ENCODE measurements at regions of chr9 and their contacts with region 1.

Region 1: DNA sequence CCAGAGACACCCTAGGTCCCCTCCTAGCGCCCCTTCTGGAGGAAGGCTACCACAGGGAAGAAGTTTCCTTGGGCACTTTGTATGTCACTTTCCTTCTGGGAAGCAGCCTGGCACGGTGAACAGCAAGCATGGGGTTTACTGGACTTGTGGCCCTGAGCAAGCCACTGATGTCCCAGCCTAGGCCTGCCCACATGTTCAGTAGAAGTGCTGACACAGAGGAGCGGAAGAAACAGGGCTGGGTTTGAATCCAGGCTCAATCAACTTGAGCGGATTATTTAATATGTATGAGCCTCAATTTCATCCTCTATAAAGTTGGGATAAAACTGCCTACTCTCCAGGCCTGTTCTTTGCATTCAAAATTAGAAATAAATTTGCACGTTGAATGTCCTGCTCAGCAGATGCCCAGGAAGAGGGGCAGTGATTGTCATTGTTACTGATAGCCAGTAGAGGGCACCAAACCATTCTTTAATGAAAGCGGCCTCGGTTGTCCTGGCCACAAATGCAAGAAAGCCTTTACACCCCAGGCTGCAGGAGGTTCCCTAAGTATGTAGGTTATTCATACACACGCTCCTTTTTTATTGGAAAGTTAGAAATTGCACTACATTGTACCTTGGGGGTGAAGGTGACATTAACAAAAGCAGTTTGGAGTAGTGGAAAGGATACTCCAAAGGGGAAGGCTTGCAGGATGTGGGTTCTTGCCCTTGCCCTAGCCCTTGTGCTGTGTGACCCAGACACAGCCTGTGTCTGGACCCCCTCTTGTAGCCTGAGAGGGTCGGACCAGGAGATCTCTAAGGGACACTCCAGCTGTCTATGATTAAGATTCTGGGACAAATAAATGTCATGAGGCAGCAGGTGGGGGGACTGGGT is 13.4 kb upstream of the XPA start:
- DNase-seq: peak; percentile 25
- H3K4me3 ChIP-seq: no peak overlapping the region
- H3K27ac ChIP-seq: no peak overlapping the region
- H3K4me1 ChIP-seq: no peaks in the 10 kb centered on the region
- H3K27me3 ChIP-seq: peaks cover 9% of the 10 kb centered on the region
- CTCF ChIP-seq: peak; percentile 77 to 88 (median 83)
- EP300 ChIP-seq: no peak
- POLR2A ChIP-seq: no peak

Region 2: DNA sequence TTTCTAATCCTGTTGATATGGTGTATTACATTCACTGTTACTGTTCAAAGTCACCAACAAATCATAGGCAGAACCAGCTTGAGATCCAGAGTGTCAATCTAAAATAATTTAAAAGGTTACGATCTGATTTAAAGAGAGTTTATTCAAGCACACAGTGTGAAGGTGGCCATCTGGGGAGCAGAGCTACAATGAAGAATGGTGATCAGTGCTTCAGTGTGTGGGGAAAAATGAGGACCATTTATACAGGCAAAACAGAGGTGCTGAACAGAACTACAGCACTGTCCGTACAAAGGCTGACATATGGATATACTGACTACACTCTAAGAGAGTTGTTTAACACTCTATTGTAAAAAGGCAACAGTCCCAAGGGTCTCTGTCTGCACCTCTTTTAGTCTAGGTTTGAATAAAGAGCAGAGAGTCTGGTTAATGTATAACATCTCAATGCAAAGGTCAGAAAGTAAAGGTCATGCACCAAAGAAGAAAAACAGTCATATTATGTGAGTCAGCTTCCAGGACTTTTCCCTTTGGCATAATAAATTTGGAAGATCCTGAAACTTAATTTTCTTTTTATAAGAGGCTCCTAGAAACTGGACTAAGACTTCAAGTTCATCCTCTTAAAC is 328.4 kb before region 1 on chr9:
- in situ Hi-C with region 1: no loop called
- intact Hi-C with region 1: no loop called
- DNase-seq: no peak
- H3K4me3 ChIP-seq: no peak overlapping the region
- H3K27ac ChIP-seq: peak overlapping the region; percentile 12 to 68 (median 62)
- H3K4me1 ChIP-seq: peaks cover 2 to 37% (median 13%) of the 10 kb centered on the region in 4 donors
- H3K27me3 ChIP-seq: no peaks in the 10 kb centered on the region
- CTCF ChIP-seq: no peak
- EP300 ChIP-seq: no peak
- POLR2A ChIP-seq: no peak

Region 3: DNA sequence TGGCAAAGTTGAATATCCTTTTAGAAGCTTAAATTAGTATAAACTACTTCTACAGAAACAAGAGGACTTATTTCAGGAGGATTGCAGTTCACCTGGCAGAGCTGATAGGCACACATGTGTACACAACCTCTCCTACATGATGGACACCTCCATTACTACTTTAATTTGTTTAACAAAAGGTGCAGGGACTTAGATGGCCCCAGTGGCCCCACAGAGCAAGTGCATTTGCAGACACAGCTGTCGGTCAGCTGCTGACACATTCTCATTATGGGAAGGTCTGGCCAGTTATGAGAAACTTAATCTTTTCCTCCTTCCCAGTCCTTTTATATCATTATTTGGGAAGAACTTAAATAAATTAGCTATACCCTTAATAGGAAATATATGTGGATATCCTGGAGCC is 270.4 kb before region 1 on chr9:
- in situ Hi-C with region 1: no loop called
- intact Hi-C with region 1: no loop called
- DNase-seq: no peak
- H3K4me3 ChIP-seq: no peak overlapping the region
- H3K27ac ChIP-seq: no peak overlapping the region
- H3K4me1 ChIP-seq: peaks cover 0 to 18% (median 0%) of the 10 kb centered on the region in 4 donors
- H3K27me3 ChIP-seq: no peaks in the 10 kb centered on the region
- CTCF ChIP-seq: no peak
- EP300 ChIP-seq: no peak
- POLR2A ChIP-seq: no peak

Region 4: GRCh38 chr9:97615439-97616072 is 95.0 kb before region 1 on chr9:
- in situ Hi-C with region 1: loop called in 1 of 4 experiments (anchors 25 kb)
- intact Hi-C with region 1: no loop called
- DNase-seq: peak; percentile 70
- H3K4me3 ChIP-seq: no peak overlapping the region
- H3K27ac ChIP-seq: no peak overlapping the region
- H3K4me1 ChIP-seq: peaks cover 0 to 10% (median 1%) of the 10 kb centered on the region in 4 donors
- H3K27me3 ChIP-seq: no peaks in the 10 kb centered on the region
- CTCF ChIP-seq: peak; percentile 81 to 88 (median 82)
- EP300 ChIP-seq: no peak
- POLR2A ChIP-seq: no peak

Region 5: GRCh38 chr9:97768736-97769135 is 58.1 kb after region 1 on chr9:
- in situ Hi-C with region 1: no loop called
- intact Hi-C with region 1: no loop called
- DNase-seq: no peak
- H3K4me3 ChIP-seq: no peak overlapping the region
- H3K27ac ChIP-seq: no peak overlapping the region
- H3K4me1 ChIP-seq: peaks cover 0 to 6% (median 3%) of the 10 kb centered on the region in 4 donors
- H3K27me3 ChIP-seq: peaks cover 9% of the 10 kb centered on the region
- CTCF ChIP-seq: no peak
- EP300 ChIP-seq: no peak
- POLR2A ChIP-seq: no peak

Region 6: DNA sequence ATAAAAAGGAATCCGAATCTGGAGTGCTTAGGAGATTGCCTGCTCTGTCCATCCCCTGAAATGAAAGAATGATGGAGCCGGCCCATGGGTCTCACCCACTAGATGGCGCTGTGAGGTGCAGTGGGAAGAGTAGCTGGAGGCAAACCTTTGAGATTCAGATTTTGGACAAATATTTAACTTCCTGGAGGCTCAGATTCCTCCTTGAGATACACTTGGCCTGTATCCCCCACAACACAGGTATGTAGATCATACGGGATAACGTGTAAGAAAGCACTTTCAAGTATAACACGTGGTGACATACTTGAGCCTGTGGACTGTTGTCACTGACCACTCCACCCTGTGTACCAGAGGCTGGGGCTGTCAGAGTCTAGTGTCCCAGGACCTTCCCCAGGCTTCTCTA is 179.4 kb after region 1 on chr9:
- in situ Hi-C with region 1: loop called in 2 of 4 experiments (anchors 5 to 10 kb)
- intact Hi-C with region 1: no loop called
- DNase-seq: peak; percentile 37
- H3K4me3 ChIP-seq: no peak overlapping the region
- H3K27ac ChIP-seq: no peak overlapping the region
- H3K4me1 ChIP-seq: no peaks in the 10 kb centered on the region
- H3K27me3 ChIP-seq: no peaks in the 10 kb centered on the region
- CTCF ChIP-seq: peak in 4 of 5 experiments; percentile 39 to 68 (median 56)
- EP300 ChIP-seq: no peak
- POLR2A ChIP-seq: no peak

Region 7: GRCh38 chr9:97900738-97901565 is 190.4 kb after region 1 on chr9:
- in situ Hi-C with region 1: loop called (anchors 5 to 10 kb)
- intact Hi-C with region 1: loop called (anchors 2 kb)
- DNase-seq: no peak
- H3K4me3 ChIP-seq: no peak overlapping the region
- H3K27ac ChIP-seq: no peak overlapping the region
- H3K4me1 ChIP-seq: peaks cover 0 to 6% (median 0%) of the 10 kb centered on the region in 4 donors
- H3K27me3 ChIP-seq: no peaks in the 10 kb centered on the region
- CTCF ChIP-seq: peak; percentile 67 to 76 (median 72)
- EP300 ChIP-seq: no peak
- POLR2A ChIP-seq: no peak

Region 8: DNA sequence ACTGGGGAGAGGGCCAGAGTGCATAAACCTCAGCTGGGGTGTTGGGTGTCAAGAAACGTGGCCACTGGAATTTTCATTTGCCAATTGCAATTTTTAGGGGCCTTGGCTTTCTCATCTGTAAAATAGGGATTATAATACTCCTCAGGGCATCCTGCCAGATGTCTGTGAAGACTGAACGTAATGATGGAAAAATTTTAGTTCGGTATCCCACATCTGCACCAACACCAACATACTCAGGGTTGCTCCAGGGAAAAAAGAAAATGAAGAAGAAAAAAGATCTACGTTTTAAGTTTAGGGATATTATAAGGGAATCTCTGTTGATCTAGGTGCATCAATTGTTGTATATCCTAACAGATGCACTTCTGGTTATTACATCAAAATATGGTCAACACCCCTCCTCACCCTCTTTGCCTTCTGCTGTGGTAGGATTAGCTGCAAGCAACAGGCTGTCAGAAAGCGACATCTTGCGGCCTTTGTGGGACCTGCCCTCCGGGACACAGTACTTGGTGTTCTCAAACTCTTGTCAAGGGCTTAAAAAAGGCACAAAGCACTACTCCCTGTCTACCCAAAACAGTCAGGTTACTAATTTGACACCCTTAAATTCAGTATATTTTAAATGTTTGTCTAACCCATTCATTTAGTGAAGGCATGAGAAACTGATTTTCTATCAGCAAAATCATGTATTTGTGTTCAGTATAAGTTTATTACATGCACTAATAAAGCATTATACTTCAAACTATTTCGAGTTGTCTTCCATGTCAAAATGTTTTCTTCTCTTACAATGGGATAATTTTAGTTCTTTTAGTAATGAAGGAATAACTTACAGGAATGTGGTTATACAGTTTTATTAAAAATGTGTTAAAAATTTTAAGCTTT is 553.1 kb after region 1 on chr9:
- in situ Hi-C with region 1: loop called in 1 of 4 experiments (anchors 25 kb)
- intact Hi-C with region 1: loop called (anchors 5 kb)
- DNase-seq: peak; percentile 86
- H3K4me3 ChIP-seq: no peak overlapping the region
- H3K27ac ChIP-seq: no peak overlapping the region
- H3K4me1 ChIP-seq: no peaks in the 10 kb centered on the region
- H3K27me3 ChIP-seq: no peaks in the 10 kb centered on the region
- CTCF ChIP-seq: peak; percentile 84 to 91 (median 88)
- EP300 ChIP-seq: no peak
- POLR2A ChIP-seq: no peak